AG04449 (cell line): ENCODE measurements at regions of chr14 and their contacts with region 1.

Region 1: DNA sequence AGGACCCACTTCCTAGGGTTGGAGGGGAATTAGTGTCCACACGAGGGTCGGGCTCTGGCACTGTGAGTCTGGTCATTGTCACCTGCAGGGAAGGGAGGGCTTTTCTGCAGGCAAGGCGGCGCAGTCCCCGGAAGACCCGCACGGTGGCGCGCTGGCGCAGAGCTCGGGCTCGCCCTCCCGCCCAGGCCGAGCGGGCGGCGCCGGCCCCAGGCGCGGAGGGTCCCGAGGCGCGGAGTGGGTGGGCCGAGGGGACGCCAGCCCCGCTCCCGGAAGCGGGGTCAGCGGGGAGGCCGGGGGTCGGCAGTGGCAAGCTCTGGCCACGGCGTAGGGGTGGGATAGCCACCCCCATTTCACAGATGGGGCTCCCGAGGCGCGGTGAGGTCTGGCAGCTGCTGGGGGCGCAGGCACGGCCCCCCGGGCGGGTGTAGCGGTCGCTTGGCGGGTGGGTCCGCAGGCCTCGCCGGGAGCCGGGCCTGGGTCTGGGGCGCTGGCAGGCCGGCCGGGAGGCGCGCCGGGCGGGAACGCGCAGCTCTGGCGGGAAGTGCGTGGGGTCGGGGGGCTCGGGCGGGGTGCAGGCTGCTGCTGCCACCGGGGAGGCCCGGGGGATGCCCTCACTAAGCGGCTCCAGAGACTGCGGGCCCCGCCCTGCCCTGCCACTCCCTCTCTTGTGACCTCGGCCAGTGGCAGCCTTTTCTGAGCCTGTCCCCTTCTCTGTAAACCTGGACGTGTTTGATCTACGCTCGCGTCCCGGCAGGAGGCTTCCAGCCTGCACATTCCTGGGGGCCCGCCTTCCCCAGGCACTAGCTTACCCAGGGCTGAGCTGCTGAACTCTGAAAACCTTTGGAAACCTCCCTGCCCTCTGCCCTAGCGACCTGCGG is 46.1 kb downstream of the CYP46A1 start:
- DNase-seq: no peak
- H3K4me3 ChIP-seq: peak overlapping the region; percentile 59
- CTCF ChIP-seq: peak; percentile 89

Region 2: DNA sequence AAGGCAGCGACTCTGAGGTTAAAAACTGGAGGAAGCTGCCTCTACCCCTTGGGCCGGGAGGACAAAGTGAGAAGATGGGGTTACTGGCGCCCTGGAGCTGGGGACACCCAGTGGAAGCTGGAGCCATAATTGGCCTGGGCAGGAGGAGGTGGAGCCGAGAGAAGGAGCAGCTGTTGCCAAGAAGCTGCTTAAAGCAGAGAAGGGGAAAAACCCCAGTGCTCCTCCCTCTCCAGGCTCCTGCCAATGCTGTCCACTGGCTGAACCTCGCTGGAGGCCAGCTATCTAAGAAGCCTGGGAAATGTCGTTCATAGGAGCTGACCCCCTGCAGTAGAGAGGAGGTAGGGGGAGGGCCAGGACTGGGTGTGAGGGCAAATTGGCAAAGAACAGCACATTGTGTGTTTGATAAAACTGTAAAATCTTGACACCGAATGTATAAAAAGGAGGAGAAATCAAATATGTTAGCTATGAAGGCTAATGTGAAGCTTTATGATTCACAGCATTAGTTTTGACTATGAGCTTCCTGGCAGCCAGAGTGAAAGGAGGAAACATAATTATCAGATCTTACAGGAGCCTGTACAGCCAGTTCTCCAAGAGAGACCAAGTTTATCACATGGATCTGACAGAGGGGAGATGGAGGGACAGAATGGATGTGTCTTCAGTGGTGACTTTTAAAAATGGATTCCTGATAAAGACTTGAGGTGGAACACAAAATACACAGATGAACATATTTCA is 75.8 kb before region 1 on chr14:
- CTCF ChIA-PET with region 1: no interaction called
- POLR2A ChIA-PET with region 1: no interaction called
- DNase-seq: peak; percentile 34
- H3K4me3 ChIP-seq: no peak overlapping the region
- CTCF ChIP-seq: no peak

Region 3: GRCh38 chr14:99699085-99699760 is 31.0 kb before region 1 on chr14:
- CTCF ChIA-PET with region 1: interaction called, 17 read pairs
- POLR2A ChIA-PET with region 1: no interaction called
- DNase-seq: no peak
- H3K4me3 ChIP-seq: no peak overlapping the region
- CTCF ChIP-seq: no peak

Region 4: DNA sequence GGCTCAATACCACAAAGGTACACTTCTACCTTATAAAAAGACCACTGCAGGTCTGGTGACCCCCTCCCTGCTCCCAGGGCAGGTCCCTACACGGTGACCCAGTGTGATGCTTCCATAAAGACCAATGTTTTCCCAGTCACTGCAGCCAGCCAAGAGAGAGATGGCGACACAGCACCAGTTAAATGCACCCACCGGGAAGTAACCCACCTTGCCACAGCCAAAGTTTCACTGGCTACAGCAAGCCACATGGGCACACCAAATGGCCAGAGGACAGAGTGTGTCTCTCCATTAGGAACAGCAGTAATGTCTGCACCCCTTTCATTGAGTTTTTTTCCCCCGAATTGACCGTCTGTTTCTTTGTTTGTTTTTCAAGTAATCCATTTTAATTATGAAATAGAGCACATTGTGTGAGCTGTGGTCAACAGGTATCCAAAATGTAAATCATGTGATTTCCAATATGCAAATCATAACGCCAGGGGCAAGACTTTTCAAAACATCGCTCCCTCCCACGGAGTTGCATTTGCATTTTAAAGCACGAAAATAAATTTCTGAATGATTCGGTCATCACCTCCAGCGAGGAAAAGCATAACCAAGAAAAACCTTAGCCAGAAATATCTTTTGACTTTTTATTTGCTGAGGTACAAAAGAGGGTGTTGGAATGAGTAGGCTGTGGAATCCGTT is 14.1 kb after region 1 on chr14:
- CTCF ChIA-PET with region 1: interaction called, 43 read pairs
- POLR2A ChIA-PET with region 1: no interaction called
- DNase-seq: no peak
- H3K4me3 ChIP-seq: no peak overlapping the region
- CTCF ChIP-seq: no peak

Region 5: DNA sequence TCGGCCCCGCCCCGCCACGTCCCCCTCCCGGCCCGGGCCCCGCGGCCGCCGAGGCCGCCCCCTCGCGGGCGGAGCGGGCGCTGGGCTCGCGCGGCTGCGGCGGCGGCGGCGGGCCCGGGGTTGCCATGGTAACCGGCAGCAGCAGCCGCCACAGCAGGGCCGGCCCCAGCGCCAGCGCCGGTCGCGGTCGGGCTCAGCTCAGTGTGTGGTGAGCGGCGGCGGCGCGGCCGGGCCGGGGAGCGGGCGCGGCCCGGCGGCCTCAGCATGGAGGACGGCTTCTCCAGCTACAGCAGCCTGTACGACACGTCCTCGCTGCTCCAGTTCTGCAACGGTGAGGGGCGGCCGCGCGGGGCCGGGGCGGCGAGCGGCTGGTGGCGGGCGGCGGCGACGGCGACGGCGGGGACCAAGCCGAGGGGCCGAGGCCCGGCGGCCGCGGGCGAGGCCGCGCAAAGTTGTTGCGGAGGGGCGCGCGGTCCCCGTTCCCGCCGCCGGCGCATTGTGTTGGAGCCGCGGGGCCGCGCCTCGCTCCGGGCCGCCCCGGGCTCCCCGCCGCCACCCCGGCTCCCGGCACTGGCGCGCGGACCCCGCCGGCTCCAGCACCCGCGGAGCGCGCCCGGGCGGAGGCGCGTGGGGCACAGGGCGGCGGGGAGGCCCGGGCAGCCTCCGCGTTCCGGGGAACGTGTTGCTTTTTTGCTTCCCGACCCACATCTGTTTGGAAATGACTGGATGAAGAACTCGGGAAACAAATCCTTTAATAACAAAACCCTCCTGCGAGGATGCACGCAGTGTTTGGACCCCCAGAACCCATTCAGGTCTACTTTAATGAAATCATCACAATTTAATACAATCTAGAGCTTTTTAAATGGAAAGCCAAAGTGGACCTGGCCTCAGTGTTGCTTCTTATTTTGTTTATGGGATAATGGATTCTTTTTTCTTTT is 63.3 kb after region 1 on chr14 and contains the start of gene EML1:
- CTCF ChIA-PET with region 1: interaction called, 36 read pairs
- POLR2A ChIA-PET with region 1: no interaction called
- DNase-seq: no peak
- H3K4me3 ChIP-seq: peak within 1 kb of the TSS; percentile 64
- CTCF ChIP-seq: peak; percentile 2

Region 6: DNA sequence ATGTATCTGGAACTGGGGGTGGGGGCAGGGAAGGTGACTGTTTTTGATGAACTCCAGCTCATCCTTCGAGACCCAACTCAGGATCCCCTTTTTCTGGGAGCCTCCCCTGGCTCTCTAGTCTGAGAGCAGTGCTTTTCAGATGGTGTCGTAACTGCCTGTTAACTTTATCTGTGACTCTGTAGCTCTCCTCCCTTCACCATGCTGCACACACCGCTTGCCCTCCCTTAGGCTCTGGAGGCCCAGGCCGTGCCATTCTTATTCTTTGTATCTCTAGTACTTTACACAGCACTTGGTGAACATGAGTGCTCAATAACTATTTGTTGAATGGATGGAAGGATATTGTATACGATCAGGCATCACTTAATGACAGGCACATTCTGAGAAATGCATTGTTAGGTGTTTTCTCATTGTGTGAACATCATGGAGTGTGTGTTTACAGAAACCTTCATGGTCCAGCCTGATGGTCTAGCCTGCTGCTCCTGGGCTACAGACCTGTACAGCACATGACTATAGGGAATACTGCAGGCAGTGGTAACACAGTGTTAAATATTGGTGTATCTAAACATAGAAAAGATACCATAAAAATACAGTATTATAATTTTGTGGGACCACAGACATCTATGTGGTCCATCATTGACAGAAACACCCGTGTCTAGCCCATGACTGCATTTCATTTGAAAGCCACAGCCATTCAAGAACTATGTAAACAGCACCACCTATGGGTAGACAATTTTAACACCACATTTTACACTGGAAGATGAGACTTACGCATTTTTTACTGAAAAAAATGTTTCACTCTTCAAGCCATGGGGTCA is 154.8 kb after region 1 on chr14:
- CTCF ChIA-PET with region 1: interaction called, 325 read pairs
- POLR2A ChIA-PET with region 1: no interaction called
- DNase-seq: no peak
- H3K4me3 ChIP-seq: no peak overlapping the region
- CTCF ChIP-seq: peak; percentile 42